Mammary epithelial cell (primary cell): ENCODE measurements at regions of chr4 and their contacts with region 1.

Region 1: DNA sequence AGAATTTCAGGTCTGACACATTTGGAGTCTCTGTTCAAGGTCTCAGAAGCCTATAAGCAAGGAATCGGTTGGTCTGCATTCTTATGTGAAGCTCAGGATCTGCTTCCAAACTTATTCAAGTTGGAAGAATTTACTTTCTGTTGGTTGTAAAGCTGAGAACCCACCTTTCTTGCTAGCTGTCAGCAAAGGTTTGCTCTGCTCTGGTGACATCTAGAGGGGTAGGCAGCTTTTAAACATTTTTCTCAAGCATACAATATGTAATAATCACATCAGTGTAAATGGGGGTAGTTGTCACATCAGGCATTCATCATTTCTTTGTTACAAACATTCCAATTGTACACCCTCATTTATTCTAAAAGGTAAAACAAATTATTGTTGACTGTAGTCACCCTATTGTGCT is 935.2 kb downstream of the TRAM1L1 start:
- DNase-seq: no peak
- H3K4me3 ChIP-seq: no peak overlapping the region
- H3K27ac ChIP-seq: no peak overlapping the region
- H3K4me1 ChIP-seq: no peaks in the 10 kb centered on the region
- H3K27me3 ChIP-seq: peaks cover 2% of the 10 kb centered on the region
- CTCF ChIP-seq: peak; percentile 13 to 34

Region 2: GRCh38 chr4:116055857-116056827 is 94.0 kb before region 1 on chr4:
- CTCF ChIA-PET with region 1: interaction called, 4 read pairs
- dilution Hi-C with region 1: no loop called
- in situ Hi-C with region 1: no loop called
- intact Hi-C with region 1: loop called (anchors 1 kb)
- DNase-seq: peak; percentile 1
- H3K4me3 ChIP-seq: no peak overlapping the region
- H3K27ac ChIP-seq: no peak overlapping the region
- H3K4me1 ChIP-seq: no peaks in the 10 kb centered on the region
- H3K27me3 ChIP-seq: no peaks in the 10 kb centered on the region
- CTCF ChIP-seq: peak; percentile 25 to 44